Sigmoid colon (tissue), 7 donors: ENCODE measurements at regions of chr4 and their contacts with region 1.

Region 1: GRCh38 chr4:99462875-99463464 is 27.8 kb upstream of the ADH7 start:
- DNase-seq: peak; percentile 80
- H3K4me3 ChIP-seq: no peak overlapping the region
- H3K27ac ChIP-seq: no peak overlapping the region
- H3K4me1 ChIP-seq: no peaks in the 10 kb centered on the region
- H3K27me3 ChIP-seq: no peaks in the 10 kb centered on the region
- CTCF ChIP-seq: peak; percentile 75 to 88 (median 80)
- EP300 ChIP-seq: no peak
- POLR2A ChIP-seq: no peak

Region 2: GRCh38 chr4:98467627-98468072 is 995.3 kb before region 1 on chr4:
- intact Hi-C with region 1: loop called (anchors 10 kb)
- DNase-seq: peak; percentile 89
- H3K4me3 ChIP-seq: peak overlapping the region in 3 of 4 donors; percentile 25 to 45 (median 42)
- H3K27ac ChIP-seq: peak overlapping the region in 2 of 4 donors; percentile 8 to 23
- H3K4me1 ChIP-seq: peaks cover 0 to 14% (median 12%) of the 10 kb centered on the region in 4 donors
- H3K27me3 ChIP-seq: no peaks in the 10 kb centered on the region
- CTCF ChIP-seq: peak; percentile 64 to 73 (median 69)
- EP300 ChIP-seq: no peak
- POLR2A ChIP-seq: no peak

Region 3: DNA sequence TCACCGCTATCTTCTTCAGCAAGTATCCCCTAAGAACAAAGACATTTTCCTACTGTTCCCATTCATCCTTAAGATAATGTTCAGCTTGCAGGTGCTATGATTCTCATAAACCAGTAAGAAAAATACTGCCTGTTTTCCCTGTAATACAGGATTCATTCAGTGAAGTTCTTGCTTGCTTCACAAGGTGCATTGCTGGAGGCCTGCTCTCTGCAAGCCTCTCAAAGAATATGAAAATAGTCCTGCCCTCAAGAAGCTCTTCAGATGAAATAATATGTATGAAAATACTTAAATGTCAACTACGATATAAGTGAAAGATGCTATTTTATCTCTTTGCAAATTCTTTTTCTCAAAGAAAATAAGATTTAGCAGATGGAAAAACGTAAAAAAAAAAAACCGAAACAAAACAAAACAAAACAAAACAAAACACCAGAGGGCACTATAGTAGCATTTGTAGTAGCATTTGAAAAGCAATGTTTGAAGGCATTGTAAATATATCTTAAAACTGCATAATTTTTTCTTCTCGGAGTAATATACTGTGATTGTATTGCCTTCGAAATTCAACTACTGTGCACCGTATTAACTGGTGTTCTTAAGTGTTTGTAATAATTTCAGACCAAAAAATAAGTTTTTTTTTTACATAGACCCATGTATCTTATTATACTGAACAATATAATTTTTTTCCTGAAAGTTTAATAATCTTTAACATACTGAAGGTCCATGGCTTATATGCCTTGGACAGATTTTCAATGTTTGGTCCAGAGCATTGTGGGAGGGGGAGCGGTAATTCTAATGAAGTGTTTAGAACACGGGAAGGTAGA is 344.9 kb before region 1 on chr4:
- intact Hi-C with region 1: loop called (anchors 1 kb)
- DNase-seq: no peak
- H3K4me3 ChIP-seq: no peak overlapping the region
- H3K27ac ChIP-seq: no peak overlapping the region
- H3K4me1 ChIP-seq: peaks cover 0 to 6% (median 2%) of the 10 kb centered on the region in 4 donors
- H3K27me3 ChIP-seq: no peaks in the 10 kb centered on the region
- CTCF ChIP-seq: peak in 2 of 4 experiments; percentile 14 to 22
- EP300 ChIP-seq: no peak
- POLR2A ChIP-seq: no peak